MCF 10A (cell line): ENCODE measurements at regions of chr17 and their contacts with region 1.

Region 1: GRCh38 chr17:32828822-32829221 is 48.1 kb downstream of the MYO1D start:
- DNase-seq: no peak
- H3K4me3 Mint-ChIP-seq: peak overlapping the region; percentile 85
- H3K27ac Mint-ChIP-seq: peak overlapping the region; percentile 94
- H3K4me1 Mint-ChIP-seq: peaks cover 28% of the 10 kb centered on the region
- H3K27me3 Mint-ChIP-seq: no peaks in the 10 kb centered on the region
- CTCF ChIP-seq: no peak

Region 2: GRCh38 chr17:32854207-32854606 is 25.4 kb after region 1 on chr17:
- CTCF ChIA-PET with region 1: interaction called, 4 read pairs
- POLR2A ChIA-PET with region 1: interaction called, 14 read pairs
- intact Hi-C with region 1: no loop called
- DNase-seq: peak; percentile 17
- H3K4me3 Mint-ChIP-seq: no peak overlapping the region
- H3K27ac Mint-ChIP-seq: peak overlapping the region; percentile 33
- H3K4me1 Mint-ChIP-seq: peaks cover 15% of the 10 kb centered on the region
- H3K27me3 Mint-ChIP-seq: no peaks in the 10 kb centered on the region
- CTCF ChIP-seq: no peak

Region 3: GRCh38 chr17:32909787-32910369 is 81.1 kb after region 1 on chr17:
- CTCF ChIA-PET with region 1: interaction called, 10 read pairs
- POLR2A ChIA-PET with region 1: no interaction called
- intact Hi-C with region 1: no loop called
- DNase-seq: peak; percentile 78
- H3K4me3 Mint-ChIP-seq: no peak overlapping the region
- H3K27ac Mint-ChIP-seq: no peak overlapping the region
- H3K4me1 Mint-ChIP-seq: peaks cover 5% of the 10 kb centered on the region
- H3K27me3 Mint-ChIP-seq: no peaks in the 10 kb centered on the region
- CTCF ChIP-seq: peak; percentile 64